Gastrocnemius medialis (tissue), 4 donors: ENCODE measurements at regions of chr9 and their contacts with region 1.

Region 1: DNA sequence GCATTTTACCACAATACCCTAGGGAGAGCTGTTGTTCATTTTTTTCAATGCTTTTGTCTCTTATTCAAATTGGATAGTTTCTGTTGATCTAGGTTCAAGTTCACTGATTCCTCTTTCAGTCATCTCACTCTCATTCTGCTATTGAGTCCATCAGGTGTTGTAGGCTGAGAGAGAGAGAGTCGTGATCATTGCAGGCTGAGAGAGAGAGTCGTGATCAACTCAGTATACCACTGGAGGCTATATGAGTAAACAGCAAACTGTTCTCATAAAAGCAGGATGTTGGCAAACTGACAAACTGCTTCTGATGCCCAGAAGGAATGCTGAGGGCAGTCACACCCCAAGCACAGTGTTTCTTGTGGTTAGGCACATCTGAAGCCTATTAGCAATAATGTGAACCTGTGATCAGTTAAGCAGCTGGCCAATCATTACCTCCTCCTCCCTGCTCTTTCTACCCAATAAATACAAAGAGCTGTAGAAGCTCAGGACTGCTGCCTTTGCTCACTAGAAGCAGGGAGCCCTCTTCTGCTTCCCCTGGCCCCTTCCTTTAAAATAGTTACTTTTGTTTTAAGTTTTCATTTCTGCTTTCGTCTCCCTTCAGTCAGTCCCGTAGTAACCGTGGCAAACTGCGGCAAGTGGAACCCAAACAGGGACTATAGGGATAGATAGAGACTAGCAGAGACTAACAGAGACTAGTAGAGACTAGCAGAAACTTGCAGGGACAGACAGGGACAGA is 476.1 kb upstream of the ACO1 start:
- DNase-seq: no peak
- ATAC-seq: no peak
- H3K4me3 ChIP-seq: no peak overlapping the region
- H3K27ac ChIP-seq: no peak overlapping the region
- H3K4me1 ChIP-seq: no peaks in the 10 kb centered on the region
- H3K27me3 ChIP-seq: no peaks in the 10 kb centered on the region
- CTCF ChIP-seq: no peak
- POLR2A ChIP-seq: no peak

Region 2: DNA sequence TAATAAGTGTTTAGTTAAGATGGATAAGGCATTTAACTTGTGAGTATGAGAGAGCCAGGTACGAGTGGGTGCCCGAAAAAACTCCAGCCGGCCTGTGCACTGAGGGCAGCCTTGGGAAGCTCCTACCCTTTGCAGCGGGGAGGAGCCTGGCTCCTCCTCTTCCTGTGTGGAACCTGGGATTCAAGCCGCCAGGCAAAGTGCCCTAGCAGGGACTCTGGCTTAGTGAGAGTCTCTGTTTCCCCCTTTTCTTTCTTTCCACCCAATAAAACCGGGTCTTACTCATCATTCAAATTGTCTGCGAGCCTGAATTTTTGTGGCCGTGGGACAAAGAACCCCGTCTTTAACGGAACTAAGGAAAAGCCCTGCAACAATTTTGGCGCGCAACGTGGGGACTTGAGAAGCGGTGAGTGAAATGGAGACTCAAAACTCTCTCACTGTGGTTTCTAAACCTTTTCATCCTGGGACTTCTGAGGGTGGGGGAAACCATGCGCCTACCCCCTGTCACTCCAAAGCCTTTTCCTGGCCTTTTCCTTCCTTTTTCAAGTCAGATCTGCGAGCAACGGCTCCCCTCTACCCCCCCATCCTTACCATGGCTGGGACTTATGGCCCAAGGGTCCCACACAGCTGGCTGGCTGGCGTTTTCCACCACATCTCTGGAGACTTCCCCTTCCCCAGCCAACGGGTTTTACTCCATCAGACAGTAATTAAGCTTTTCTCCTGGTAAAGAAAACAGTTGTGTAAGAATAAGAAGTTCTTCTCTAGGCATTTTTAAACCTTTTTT is 59.6 kb before region 1 on chr9:
- in situ Hi-C with region 1: loop called in 1 of 4 experiments (anchors 10 kb)
- intact Hi-C with region 1: no loop called
- DNase-seq: no peak
- ATAC-seq: no peak
- H3K4me3 ChIP-seq: no peak overlapping the region
- H3K27ac ChIP-seq: no peak overlapping the region
- H3K4me1 ChIP-seq: no peaks in the 10 kb centered on the region
- H3K27me3 ChIP-seq: no peaks in the 10 kb centered on the region
- CTCF ChIP-seq: no peak
- POLR2A ChIP-seq: no peak

Region 3: GRCh38 chr9:32218100-32218767 is 309.9 kb after region 1 on chr9:
- in situ Hi-C with region 1: no loop called
- intact Hi-C with region 1: no loop called
- DNase-seq: no peak
- ATAC-seq: no peak
- H3K4me3 ChIP-seq: no peak overlapping the region
- H3K27ac ChIP-seq: no peak overlapping the region
- H3K4me1 ChIP-seq: no peaks in the 10 kb centered on the region
- H3K27me3 ChIP-seq: no peaks in the 10 kb centered on the region
- CTCF ChIP-seq: no peak
- POLR2A ChIP-seq: no peak

Region 4: DNA sequence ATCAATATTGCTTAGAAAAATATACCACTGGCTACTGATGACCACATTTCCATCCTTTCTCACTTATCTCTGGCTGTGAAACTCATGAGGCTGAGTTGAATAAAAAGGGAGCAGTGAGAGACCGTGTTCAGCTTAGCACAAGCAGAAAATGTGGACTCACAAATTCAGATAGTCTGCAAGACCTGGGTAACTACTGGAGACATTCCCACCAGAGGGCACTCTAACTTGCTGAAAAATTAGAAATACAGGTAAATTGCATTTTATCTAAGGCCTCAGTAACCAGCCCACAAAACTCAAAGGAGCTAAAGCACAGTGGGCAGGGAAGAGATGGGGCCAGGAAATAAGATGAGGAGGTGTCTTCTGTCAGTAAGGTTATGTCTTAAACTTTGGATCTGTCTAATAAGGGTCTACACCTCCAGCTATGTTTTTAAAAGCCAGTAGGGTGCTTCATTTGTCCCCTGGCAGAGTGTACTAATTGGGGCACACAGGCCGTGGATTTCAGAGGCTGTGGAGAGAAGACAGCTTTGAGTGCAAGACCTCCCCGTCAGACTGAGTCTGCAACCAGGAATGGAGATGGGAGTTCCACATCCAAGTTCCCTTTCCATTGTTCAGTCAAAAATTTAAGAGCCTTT is 673.3 kb after region 1 on chr9:
- in situ Hi-C with region 1: no loop called
- intact Hi-C with region 1: no loop called
- DNase-seq: no peak
- ATAC-seq: no peak
- H3K4me3 ChIP-seq: no peak overlapping the region
- H3K27ac ChIP-seq: no peak overlapping the region
- H3K4me1 ChIP-seq: no peaks in the 10 kb centered on the region
- H3K27me3 ChIP-seq: no peaks in the 10 kb centered on the region
- CTCF ChIP-seq: peak in 2 of 5 experiments; percentile 21 to 39
- POLR2A ChIP-seq: no peak